Psoas muscle (tissue), 8 donors: ENCODE measurements at regions of chr13 and their contacts with region 1.

Region 1: GRCh38 chr13:49300739-49301589 is 53.2 kb downstream of the CDADC1 start:
- DNase-seq: peak; percentile 40 to 66
- ATAC-seq: peak; percentile 73 to 87 (median 80)
- H3K4me3 ChIP-seq: peak overlapping the region; percentile 52
- H3K27ac ChIP-seq: no peak overlapping the region
- H3K4me1 ChIP-seq: no peaks in the 10 kb centered on the region
- H3K27me3 ChIP-seq: no peaks in the 10 kb centered on the region
- CTCF ChIP-seq: peak; percentile 82

Region 2: GRCh38 chr13:49436890-49437289 is 135.9 kb after region 1 on chr13:
- intact Hi-C with region 1: loop called in 1 of 2 experiments (anchors 5 kb)
- DNase-seq: peak; percentile 54 to 67
- ATAC-seq: peak; percentile 17 to 63 (median 52)
- H3K4me3 ChIP-seq: no peak overlapping the region
- H3K27ac ChIP-seq: no peak overlapping the region
- H3K4me1 ChIP-seq: no peaks in the 10 kb centered on the region
- H3K27me3 ChIP-seq: no peaks in the 10 kb centered on the region
- CTCF ChIP-seq: no peak

Region 3: GRCh38 chr13:49606747-49607648 is 306.0 kb after region 1 on chr13:
- intact Hi-C with region 1: loop called (anchors 1 to 2 kb)
- DNase-seq: peak; percentile 84 to 91
- ATAC-seq: peak; percentile 89 to 100 (median 98)
- H3K4me3 ChIP-seq: peak overlapping the region; percentile 54
- H3K27ac ChIP-seq: no peak overlapping the region
- H3K4me1 ChIP-seq: no peaks in the 10 kb centered on the region
- H3K27me3 ChIP-seq: no peaks in the 10 kb centered on the region
- CTCF ChIP-seq: peak; percentile 84

Region 4: DNA sequence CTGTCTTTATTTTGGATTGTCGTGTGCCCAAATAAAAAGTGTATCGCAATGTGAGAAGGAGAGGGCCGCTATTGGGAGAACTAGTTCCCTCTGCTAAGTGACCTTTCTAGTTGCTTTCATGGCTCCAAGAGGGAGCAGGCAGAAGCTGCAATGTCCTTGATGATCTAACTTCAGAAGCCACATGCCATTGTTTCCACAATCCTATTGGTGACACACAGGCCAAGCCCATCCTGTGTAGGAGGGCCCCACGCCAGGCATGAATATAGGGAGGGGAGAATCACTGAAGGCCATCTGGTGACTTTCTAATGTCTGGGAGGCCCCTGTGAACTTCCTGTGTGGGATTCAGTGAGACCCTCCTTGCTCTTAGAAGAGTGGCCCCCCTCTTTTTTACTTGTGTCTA is 539.3 kb after region 1 on chr13:
- intact Hi-C with region 1: loop called (anchors 5 to 10 kb)
- DNase-seq: no peak
- ATAC-seq: no peak
- H3K4me3 ChIP-seq: no peak overlapping the region
- H3K27ac ChIP-seq: no peak overlapping the region
- H3K4me1 ChIP-seq: no peaks in the 10 kb centered on the region
- H3K27me3 ChIP-seq: no peaks in the 10 kb centered on the region
- CTCF ChIP-seq: no peak